ENCODE measurements at regions of chr2 and their contacts with region 1.

Region 1: DNA sequence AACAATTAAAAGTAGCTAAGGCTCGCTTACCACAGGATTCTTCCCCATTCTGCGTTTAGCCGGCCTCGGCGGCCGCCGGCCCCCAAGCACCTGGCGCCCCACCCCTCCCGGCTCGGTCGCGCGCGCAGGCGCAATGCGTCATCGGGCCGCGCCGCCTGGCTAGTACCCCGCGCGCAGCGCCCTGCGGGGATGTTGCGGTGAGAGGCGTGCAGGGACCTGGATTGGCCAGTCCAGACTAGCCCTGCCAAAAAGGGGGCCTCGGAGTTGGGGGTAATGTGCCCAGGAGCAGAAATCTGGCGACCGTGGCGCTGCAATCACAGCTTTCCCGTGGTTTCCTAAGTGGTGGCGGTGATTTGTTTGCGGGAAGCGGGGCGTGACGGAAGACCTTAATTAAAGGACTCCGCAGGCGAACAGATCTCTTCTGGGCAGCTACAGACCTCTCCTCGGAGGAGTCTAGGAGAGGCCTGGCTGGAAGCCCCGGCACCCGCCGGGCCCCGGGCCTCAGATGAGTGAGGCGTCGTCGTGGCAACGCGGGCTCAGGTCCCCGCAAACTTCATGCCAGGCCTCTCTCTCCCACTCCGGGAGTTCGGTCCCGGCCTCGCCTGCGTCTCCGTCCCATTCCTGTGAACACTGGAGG is 606 bp downstream of the TMEM237 start:
- DNase-seq: peak; percentile 91
- ATAC-seq: peak; percentile 82
- H3K4me3 Mint-ChIP-seq: peak overlapping the region; percentile 79
- H3K27ac Mint-ChIP-seq: peak overlapping the region; percentile 84
- H3K4me1 Mint-ChIP-seq: peaks cover 9% of the 10 kb centered on the region
- H3K27me3 Mint-ChIP-seq: no peaks in the 10 kb centered on the region

Region 2: DNA sequence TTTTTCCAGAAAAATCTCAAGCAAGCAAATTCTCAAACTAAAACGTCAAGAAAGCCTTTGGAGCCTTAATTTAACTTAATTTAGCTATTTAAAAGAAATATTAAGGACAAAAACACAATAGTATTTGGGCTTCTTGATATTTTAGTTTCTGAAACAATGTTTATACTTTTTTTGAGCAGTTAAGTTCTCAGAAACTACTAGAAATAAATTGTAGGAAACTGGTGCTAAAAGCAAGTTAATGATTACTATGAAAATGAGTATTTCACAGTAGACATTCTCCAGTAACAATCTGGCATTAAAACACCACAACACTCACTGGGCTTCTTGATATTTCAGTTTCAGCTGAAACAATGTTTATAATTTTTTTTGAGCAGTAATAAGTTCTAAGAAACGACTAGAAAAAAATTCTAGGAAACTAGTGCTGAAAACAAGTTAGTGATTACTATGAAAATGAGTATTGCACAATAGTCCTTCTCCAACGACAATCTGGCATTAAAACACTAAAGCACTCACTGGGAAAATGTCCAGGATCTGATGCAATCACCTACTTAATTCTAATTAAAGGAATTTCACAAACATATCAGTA is 236.5 kb before region 1 on chr2:
- CTCF ChIA-PET with region 1: no interaction called
- POLR2A ChIA-PET with region 1: no interaction called
- intact Hi-C with region 1: no loop called
- DNase-seq: no peak
- ATAC-seq: peak; percentile 39
- H3K4me3 Mint-ChIP-seq: no peak overlapping the region
- H3K27ac Mint-ChIP-seq: peak overlapping the region; percentile 31
- H3K4me1 Mint-ChIP-seq: peaks cover 25% of the 10 kb centered on the region
- H3K27me3 Mint-ChIP-seq: no peaks in the 10 kb centered on the region

Region 3: GRCh38 chr2:202033321-202034248 is 390.9 kb after region 1 on chr2 and contains the start of gene FZD7:
- CTCF ChIA-PET with region 1: no interaction called
- POLR2A ChIA-PET with region 1: no interaction called
- intact Hi-C with region 1: loop called in 1 of 2 experiments (anchors 2 kb)
- DNase-seq: peak; percentile 91
- ATAC-seq: peak; percentile 83
- H3K4me3 Mint-ChIP-seq: peak within 1 kb of the TSS; percentile 72
- H3K27ac Mint-ChIP-seq: peak within 1 kb of the TSS; percentile 22
- H3K4me1 Mint-ChIP-seq: peaks cover 13% of the 10 kb centered on the region
- H3K27me3 Mint-ChIP-seq: peaks cover 21% of the 10 kb centered on the region
- total RNA-seq, gene FZD7: 0.58 to 0.94 TPM